Ascending aorta (tissue), 2 donors: ENCODE measurements at regions of chrX and their contacts with region 1.

Region 1: GRCh38 chrX:134338527-134338926 is 101.5 kb downstream of the CCDC160 start:
- DNase-seq: no peak
- H3K4me3 ChIP-seq: no peak overlapping the region
- H3K27ac ChIP-seq: no peak overlapping the region
- H3K4me1 ChIP-seq: no peaks in the 10 kb centered on the region
- H3K27me3 ChIP-seq: no peaks in the 10 kb centered on the region
- CTCF ChIP-seq: no peak

Region 2: GRCh38 chrX:134074151-134074550 is 264.4 kb before region 1 on chrX:
- intact Hi-C with region 1: loop called (anchors 5 kb)
- DNase-seq: no peak
- H3K4me3 ChIP-seq: no peak overlapping the region
- H3K27ac ChIP-seq: no peak overlapping the region
- H3K4me1 ChIP-seq: no peaks in the 10 kb centered on the region
- H3K27me3 ChIP-seq: no peaks in the 10 kb centered on the region
- CTCF ChIP-seq: no peak

Region 3: DNA sequence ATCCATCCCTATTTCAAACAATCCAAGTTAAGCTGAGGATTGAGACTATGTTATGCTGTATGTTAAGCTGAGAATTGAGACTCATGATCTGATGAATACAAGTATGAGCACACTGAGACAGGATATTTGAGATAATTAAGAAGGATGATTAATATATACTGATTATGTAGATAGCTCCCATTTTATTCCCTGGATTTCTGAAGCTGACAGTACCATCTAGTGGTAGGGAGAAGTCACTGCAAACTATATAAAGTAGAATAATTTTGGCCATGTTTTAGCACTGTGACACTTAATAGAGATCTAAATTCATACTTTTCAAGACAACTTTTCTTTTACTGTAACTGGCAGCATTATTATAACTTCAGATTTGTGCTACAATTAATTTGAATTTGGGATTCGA is 57.6 kb after region 1 on chrX:
- intact Hi-C with region 1: no loop called
- DNase-seq: no peak
- H3K4me3 ChIP-seq: no peak overlapping the region
- H3K27ac ChIP-seq: no peak overlapping the region
- H3K4me1 ChIP-seq: no peaks in the 10 kb centered on the region
- H3K27me3 ChIP-seq: no peaks in the 10 kb centered on the region
- CTCF ChIP-seq: peak in 2 of 3 experiments; percentile 61 to 67

Region 4: GRCh38 chrX:135094726-135095125 is 756.2 kb after region 1 on chrX:
- intact Hi-C with region 1: no loop called
- DNase-seq: no peak
- H3K4me3 ChIP-seq: no peak overlapping the region
- H3K27ac ChIP-seq: no peak overlapping the region
- H3K4me1 ChIP-seq: no peaks in the 10 kb centered on the region
- H3K27me3 ChIP-seq: no peaks in the 10 kb centered on the region
- CTCF ChIP-seq: no peak